Panc1 (cell line): ENCODE measurements at regions of chr10 and their contacts with region 1.

Region 1: GRCh38 chr10:60769406-60769805 is 8.9 kb upstream of the CDK1 start:
- DNase-seq: no peak
- ATAC-seq: no peak; the same call in 1 of the 2 replicates
- H3K4me3 ChIP-seq: no peak overlapping the region
- H3K27ac ChIP-seq: no peak overlapping the region
- H3K4me1 ChIP-seq: no peaks in the 10 kb centered on the region
- H3K27me3 ChIP-seq: peaks cover 7% of the 10 kb centered on the region; the same call in 1 of the 2 replicates
- CTCF ChIP-seq: no peak

Region 2: GRCh38 chr10:60549686-60550085 is 219.7 kb before region 1 on chr10:
- CTCF ChIA-PET with region 1: no interaction called
- POLR2A ChIA-PET with region 1: no interaction called
- in situ Hi-C with region 1: no loop called
- intact Hi-C with region 1: loop called (anchors 5 kb)
- DNase-seq: no peak
- ATAC-seq: peak; percentile 84
- H3K4me3 ChIP-seq: no peak overlapping the region
- H3K27ac ChIP-seq: no peak overlapping the region
- H3K4me1 ChIP-seq: no peaks in the 10 kb centered on the region
- H3K27me3 ChIP-seq: no peaks in the 10 kb centered on the region
- CTCF ChIP-seq: peak; percentile 63; the same call in 1 of the 2 replicates

Region 3: GRCh38 chr10:61047081-61047480 is 277.7 kb after region 1 on chr10:
- CTCF ChIA-PET with region 1: no interaction called
- POLR2A ChIA-PET with region 1: no interaction called
- in situ Hi-C with region 1: no loop called
- intact Hi-C with region 1: no loop called
- DNase-seq: no peak
- ATAC-seq: no peak
- H3K4me3 ChIP-seq: no peak overlapping the region
- H3K27ac ChIP-seq: no peak overlapping the region
- H3K4me1 ChIP-seq: no peaks in the 10 kb centered on the region
- H3K27me3 ChIP-seq: no peaks in the 10 kb centered on the region
- CTCF ChIP-seq: no peak